AG04450 (cell line): ENCODE measurements at regions of chr9 and their contacts with region 1.

Region 1: DNA sequence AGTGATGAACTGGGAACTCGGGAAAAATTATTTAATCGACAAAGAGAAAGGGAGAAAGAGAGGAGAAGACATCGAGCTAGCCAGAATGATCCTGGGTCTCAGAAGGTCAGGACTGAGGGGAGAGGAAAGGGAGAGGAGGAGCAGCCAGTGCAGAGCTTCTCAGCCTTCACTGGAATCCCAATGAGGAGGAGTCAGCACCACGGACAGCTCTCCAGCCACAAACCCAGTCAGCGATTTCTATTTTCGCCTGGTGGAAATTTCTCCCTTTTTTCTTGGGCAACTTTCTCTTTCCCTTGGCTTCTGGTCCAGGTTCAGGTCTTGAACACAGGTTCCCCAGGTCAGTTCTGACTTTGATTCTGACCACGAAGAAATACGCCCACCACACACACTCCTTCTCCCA is 1.6 kb upstream of the BRINP1 start:
- DNase-seq: no peak
- H3K4me3 ChIP-seq: no peak overlapping the region
- H3K27ac ChIP-seq: no peak overlapping the region
- H3K27me3 ChIP-seq: no peaks in the 10 kb centered on the region
- CTCF ChIP-seq: no peak

Region 2: GRCh38 chr9:119349351-119349825 is 21.4 kb before region 1 on chr9:
- CTCF ChIA-PET with region 1: no interaction called
- POLR2A ChIA-PET with region 1: no interaction called
- DNase-seq: no peak
- H3K4me3 ChIP-seq: no peak overlapping the region
- H3K27ac ChIP-seq: no peak overlapping the region
- H3K27me3 ChIP-seq: no peaks in the 10 kb centered on the region
- CTCF ChIP-seq: no peak

Region 3: DNA sequence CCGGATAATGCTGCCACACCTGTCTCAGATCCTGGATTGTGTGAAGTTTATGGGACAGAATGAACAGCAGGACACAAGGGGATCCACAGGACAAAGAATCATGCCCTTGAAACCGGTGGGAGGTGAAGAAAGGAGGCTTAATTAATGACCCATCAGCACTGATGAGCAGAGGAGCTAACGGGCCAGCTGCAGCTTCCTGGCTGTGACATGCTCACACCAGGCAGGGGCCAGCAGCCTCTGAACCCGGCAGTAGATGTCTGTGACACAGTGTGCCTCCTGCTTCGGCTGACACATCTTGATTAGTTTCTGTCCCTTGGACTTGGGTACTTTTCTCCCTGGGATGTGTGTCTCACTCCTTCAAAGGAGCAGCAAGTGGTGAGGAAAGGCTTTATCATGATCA is 327.2 kb after region 1 on chr9:
- CTCF ChIA-PET with region 1: interaction called, 11 read pairs
- POLR2A ChIA-PET with region 1: no interaction called
- DNase-seq: no peak
- H3K4me3 ChIP-seq: no peak overlapping the region
- H3K27ac ChIP-seq: no peak overlapping the region
- H3K27me3 ChIP-seq: no peaks in the 10 kb centered on the region
- CTCF ChIP-seq: no peak